ENCODE measurements at regions of chr16 and their contacts with region 1.

Region 1: DNA sequence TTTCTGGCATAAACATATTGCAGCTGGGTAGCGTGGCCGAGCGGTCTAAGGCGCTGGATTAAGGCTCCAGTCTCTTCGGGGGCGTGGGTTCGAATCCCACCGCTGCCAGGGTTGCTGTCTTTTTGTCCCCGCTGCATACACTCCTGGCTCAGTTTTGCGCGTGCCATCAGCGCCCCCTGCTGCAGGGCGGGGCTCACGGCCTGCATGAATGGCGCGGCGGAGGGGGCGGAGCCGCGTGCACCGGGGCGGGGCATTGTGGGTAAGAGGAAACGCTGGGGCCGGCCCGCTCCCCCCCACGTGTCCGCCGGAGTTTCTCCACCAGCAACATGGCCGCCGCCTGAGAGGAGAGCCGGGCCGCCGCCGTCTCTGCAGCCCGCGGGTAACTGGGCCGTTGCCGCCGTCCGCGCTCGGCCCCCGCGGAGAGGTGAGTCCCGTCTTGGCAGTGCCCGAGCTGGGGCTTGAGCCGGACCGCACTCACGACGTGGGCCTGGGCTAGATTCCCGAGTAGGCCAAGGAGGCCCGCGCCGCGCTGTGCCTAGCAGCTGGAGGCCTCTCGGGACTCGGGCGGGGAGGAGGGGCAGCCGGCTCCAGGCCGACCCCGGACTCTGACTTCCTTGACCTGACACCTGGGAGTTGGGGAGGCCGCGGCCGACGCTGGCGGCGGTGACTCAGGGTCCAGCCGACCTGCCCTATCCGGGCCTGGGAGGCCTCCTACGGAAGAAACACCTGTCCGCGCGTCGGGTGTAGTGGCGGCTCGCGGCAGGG is at the start of gene POLR3E:
- DNase-seq: peak; percentile 100
- total RNA-seq, gene POLR3E: 28.6 to 33.0 TPM

Region 2: DNA sequence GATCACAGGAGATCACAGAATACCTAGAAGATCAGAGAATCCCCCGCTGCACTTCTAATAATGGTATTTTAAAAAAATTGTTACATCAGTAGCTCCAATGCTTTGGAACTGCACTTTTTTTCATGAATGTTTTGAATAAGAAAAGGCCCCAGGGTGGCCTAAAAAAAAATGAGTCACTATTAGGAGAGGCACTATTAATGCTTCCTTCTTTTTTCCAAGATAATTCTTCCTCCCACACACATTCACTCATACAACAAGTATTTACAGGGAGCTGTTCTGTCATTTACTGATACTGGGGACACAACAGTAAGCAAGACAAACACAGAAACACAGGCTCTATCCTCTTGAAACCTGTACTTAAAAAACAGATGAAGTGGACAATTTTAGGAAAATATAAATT is 295.7 kb before region 1 on chr16:
- intact Hi-C with region 1: loop called in 1 of 2 experiments (anchors 10 kb)
- DNase-seq: no peak

Region 3: GRCh38 chr16:22198547-22199293 is 98.6 kb before region 1 on chr16:
- intact Hi-C with region 1: loop called in 1 of 2 experiments (anchors 2 kb)
- DNase-seq: no peak

Region 4: GRCh38 chr16:22348296-22348695 is 51.0 kb after region 1 on chr16:
- intact Hi-C with region 1: loop called in 1 of 2 experiments (anchors 2 kb)
- DNase-seq: no peak

Measured in posterior vena cava (tissue), 2 donors.